Calu3 (cell line): ENCODE measurements at regions of chr20 and their contacts with region 1.

Region 1: DNA sequence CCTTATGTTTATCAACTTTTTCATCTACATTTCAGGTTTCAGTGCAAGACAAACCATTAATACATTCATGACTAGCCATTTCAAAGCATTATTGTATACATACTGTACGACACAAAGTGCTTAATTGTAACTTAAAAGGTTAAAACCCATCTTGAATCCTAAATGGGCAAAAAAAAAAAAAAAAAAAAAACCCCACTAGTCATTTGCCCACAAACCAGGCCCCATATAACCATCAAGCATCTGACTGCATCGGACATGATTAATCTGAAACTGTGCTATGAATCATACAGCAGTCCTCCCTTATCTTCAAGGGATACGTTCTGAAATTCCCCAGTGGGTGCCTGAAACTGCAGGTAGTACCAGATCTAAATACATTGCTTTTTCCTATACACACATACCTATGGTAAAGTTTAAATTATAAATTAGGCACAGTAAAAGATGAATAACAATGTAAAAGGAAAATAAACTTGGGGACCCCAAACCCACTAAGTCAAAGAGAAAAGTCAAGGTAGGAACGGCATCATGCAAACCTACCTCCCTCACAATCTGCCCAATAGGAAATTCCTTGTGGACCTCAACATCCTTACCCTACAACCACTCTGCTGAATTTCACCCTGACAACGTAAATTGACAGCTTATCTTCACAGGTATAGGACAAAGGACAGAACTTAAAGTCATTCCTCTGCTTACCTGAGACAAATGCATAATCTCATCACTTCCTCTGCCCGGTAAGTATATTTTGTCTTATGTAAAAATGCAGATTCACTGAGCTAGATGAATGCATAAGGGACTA is 14.3 kb downstream of the B4GALT5 start:
- DNase-seq: no peak
- H3K4me3 Mint-ChIP-seq: peak overlapping the region; percentile 6
- H3K27ac Mint-ChIP-seq: peak overlapping the region; percentile 63
- H3K4me1 Mint-ChIP-seq: peaks cover 70% of the 10 kb centered on the region
- H3K27me3 Mint-ChIP-seq: no peaks in the 10 kb centered on the region
- CTCF ChIP-seq: no peak

Region 2: DNA sequence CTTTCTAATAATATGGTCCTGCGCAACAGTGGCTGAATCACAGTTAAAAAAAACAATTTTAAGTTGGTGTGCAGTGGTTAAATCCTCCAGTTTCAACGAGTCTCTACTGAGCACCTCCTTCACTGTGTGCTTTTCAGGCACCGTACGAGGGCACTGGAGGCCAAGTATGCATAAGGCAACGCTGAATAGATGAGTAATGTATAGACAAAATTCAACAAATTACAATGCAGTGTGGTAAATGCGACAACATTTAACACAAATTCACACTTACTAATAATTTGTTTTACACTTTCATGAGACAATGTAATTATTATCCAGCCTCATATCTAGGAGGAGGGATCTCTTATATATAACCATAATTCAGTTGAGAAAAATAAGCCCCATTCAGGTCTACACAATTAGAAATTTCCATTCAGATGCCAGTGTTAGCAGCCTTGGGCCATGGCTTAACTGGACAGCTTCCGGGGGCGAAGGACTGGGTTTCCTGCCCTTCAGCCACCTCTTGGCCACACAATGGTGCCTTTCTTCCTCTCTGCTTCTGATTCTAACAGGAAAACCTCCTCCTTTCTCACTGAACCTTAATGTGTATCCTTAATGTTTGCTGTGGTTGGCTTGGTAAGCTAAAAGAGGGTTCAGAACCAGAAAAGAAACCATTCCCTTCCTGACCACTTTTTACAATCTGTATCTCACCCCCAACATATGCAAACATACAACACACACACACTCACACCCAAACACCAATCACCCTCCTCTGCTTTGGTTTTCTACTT is 37.7 kb before region 1 on chr20:
- CTCF ChIA-PET with region 1: interaction called, 6 read pairs
- intact Hi-C with region 1: loop called (anchors 5 kb)
- DNase-seq: peak; percentile 60
- H3K4me3 Mint-ChIP-seq: peak overlapping the region; percentile 5
- H3K27ac Mint-ChIP-seq: peak overlapping the region; percentile 20
- H3K4me1 Mint-ChIP-seq: peaks cover 43% of the 10 kb centered on the region
- H3K27me3 Mint-ChIP-seq: no peaks in the 10 kb centered on the region
- CTCF ChIP-seq: no peak

Region 3: DNA sequence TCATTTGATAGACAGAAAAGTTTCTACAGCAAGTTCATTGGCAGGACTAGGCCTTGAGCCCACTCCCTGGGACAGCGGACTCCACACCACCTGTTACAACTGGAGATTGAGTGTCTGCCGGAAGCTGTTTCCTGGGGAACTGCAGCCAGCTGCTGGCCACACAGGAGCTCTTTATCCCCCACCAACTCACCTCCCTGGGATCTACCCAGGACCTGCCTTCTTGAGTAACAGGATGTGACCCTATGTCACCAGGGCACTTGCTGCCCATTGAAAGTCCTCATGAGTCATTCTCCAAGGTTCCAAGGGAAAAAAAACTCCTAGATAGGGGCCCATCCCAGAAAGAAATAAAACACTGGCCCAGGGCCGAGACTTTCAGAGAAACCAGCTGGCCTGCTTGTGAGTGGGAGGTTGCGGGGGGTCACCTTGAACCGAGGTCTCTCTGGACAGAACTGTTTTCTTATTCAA is 75.9 kb after region 1 on chr20:
- CTCF ChIA-PET with region 1: interaction called, 7 read pairs
- intact Hi-C with region 1: loop called (anchors 10 kb)
- DNase-seq: peak; percentile 89
- H3K4me3 Mint-ChIP-seq: peak overlapping the region; percentile 43
- H3K27ac Mint-ChIP-seq: peak overlapping the region; percentile 85
- H3K4me1 Mint-ChIP-seq: peaks cover 73% of the 10 kb centered on the region
- H3K27me3 Mint-ChIP-seq: no peaks in the 10 kb centered on the region
- CTCF ChIP-seq: no peak

Region 4: GRCh38 chr20:49790077-49790798 is 90.8 kb after region 1 on chr20:
- CTCF ChIA-PET with region 1: interaction called, 3 read pairs
- intact Hi-C with region 1: loop called (anchors 5 kb)
- DNase-seq: no peak
- H3K4me3 Mint-ChIP-seq: peak overlapping the region; percentile 0
- H3K27ac Mint-ChIP-seq: peak overlapping the region; percentile 65
- H3K4me1 Mint-ChIP-seq: peaks cover 73% of the 10 kb centered on the region
- H3K27me3 Mint-ChIP-seq: no peaks in the 10 kb centered on the region
- CTCF ChIP-seq: no peak

Region 5: DNA sequence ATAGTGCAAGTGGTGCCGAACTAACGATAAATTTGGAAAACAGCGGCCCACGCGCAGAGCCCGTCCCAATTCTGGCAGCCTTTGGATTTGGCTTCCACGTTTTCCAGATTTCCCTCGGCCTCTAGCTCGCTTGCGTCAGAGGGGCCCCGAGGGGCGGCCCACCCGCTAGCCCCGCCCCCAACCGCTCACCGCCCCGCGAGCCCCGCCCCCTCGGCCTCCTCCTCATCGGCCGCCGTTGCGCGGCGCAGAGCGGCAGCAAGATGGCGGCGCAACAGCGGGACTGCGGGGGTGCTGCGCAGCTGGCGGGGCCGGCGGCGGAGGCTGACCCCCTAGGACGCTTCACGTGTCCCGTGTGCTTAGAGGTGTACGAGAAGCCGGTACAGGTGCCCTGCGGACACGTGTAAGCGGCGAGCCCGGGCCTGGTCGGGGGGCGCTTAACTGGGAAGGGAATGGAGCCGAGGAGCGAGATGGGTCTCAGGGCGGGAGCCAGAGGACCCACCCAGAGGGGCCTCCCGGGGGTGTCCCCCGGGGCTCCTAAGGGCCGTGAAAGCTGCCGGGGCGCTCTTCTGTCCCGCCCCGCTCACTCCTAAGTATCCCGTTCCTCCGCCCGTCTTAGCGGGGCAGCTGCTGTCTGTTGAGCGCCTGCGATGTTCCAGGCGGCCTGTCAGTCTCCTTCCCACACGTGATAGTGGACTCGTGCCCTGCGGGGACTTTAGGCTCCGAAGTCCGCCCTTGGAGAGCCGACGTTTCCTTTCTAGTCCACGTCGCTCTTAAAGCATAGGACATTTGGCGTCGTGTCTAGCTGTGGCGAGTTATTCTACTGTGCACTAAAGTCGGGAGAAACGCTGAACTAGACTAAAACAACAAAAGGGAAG is 237.0 kb after region 1 on chr20 and contains the start of gene RNF114:
- CTCF ChIA-PET with region 1: interaction called, 12 read pairs
- intact Hi-C with region 1: no loop called
- DNase-seq: peak; percentile 96
- H3K4me3 Mint-ChIP-seq: peak within 1 kb of the TSS; percentile 96
- H3K27ac Mint-ChIP-seq: peak within 1 kb of the TSS; percentile 65
- H3K4me1 Mint-ChIP-seq: peaks cover 31% of the 10 kb centered on the region
- H3K27me3 Mint-ChIP-seq: no peaks in the 10 kb centered on the region
- CTCF ChIP-seq: no peak
- total RNA-seq, gene RNF114: 72.3 and 93.9 TPM in 2 replicates